Ovary (tissue), 10 donors: ENCODE measurements at regions of chr14 and their contacts with region 1.

Region 1: DNA sequence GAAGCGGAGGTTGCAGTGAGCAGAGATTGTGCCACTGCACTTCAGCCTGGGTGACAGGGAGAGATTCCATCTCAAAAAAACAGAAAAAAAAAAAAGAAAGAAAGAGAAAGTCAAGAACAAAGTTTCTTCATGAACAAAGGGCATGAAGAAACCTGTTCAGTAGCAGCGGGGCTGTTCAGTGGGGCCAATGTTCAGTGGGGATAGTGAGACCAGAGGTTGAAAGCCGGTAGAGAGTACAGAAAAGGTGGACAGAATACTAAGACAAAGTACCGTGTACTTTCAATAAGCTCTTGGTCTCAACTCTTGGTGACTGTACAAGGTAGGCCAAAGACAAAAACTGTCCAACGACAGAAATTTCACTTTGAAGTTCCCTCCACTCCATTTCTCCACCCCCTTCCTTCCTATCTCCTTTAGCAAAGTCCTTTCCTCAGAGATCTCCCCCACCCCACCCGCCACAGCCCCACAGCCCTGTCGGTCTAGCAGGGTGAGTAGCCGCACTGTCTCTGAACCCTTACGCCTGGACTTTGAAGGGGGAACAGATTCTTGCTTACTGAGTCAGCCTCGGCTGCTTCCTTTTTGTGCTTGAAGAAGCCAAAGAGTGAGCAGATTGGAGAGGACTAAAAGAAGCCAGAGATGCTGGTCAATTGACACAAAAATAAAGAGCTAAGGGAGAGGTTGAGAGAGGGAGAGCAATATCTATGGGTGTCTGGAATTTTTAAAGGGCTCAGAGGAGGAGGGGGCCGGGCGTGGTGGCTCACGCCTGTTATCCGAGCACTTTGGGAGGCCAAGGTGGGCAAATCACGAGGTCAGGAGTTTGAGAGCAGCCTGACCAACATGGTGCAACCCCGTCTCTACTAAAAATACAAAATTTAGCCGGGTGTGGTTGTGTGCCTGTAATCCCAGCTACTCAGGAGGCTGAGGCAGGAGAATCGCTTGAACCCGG is 44.2 kb upstream of the FOS start:
- DNase-seq: peak in 2 of 5 donors; percentile 39 to 48
- H3K4me3 ChIP-seq: no peak overlapping the region
- H3K27ac ChIP-seq: no peak overlapping the region
- H3K4me1 ChIP-seq: peaks cover 13% of the 10 kb centered on the region
- H3K27me3 ChIP-seq: no peaks in the 10 kb centered on the region
- CTCF ChIP-seq: no peak
- EP300 ChIP-seq: no peak
- POLR2A ChIP-seq: no peak

Region 2: GRCh38 chr14:75126679-75127473 is 107.6 kb before region 1 on chr14 and contains the start of gene NEK9:
- intact Hi-C with region 1: no loop called
- DNase-seq: peak; percentile 89 to 94 (median 91)
- H3K4me3 ChIP-seq: peak within 1 kb of the TSS; percentile 82
- H3K27ac ChIP-seq: peak within 1 kb of the TSS; percentile 62 to 90
- H3K4me1 ChIP-seq: peaks cover 6% of the 10 kb centered on the region
- H3K27me3 ChIP-seq: no peaks in the 10 kb centered on the region
- CTCF ChIP-seq: peak in 1 of 3 donors; percentile 12
- EP300 ChIP-seq: no peak
- POLR2A ChIP-seq: peak; percentile 91
- total RNA-seq, gene NEK9: 58.1 to 140 (median 117) TPM

Region 3: GRCh38 chr14:75184039-75184835 is 50.2 kb before region 1 on chr14:
- intact Hi-C with region 1: loop called in 1 of 4 experiments (anchors 2 kb)
- DNase-seq: no peak
- H3K4me3 ChIP-seq: no peak overlapping the region
- H3K27ac ChIP-seq: no peak overlapping the region
- H3K4me1 ChIP-seq: peaks cover 9% of the 10 kb centered on the region
- H3K27me3 ChIP-seq: no peaks in the 10 kb centered on the region
- CTCF ChIP-seq: no peak
- EP300 ChIP-seq: no peak
- POLR2A ChIP-seq: no peak